HCT116 (cell line): ENCODE measurements at regions of chr4 and their contacts with region 1.

Region 1: GRCh38 chr4:84503495-84504437 is 4.7 kb upstream of the NKX6-1 start:
- DNase-seq: peak; percentile 62
- ATAC-seq: peak; percentile 64
- H3K4me3 ChIP-seq: no peak overlapping the region
- H3K27ac ChIP-seq: no peak overlapping the region
- H3K4me1 ChIP-seq: peaks cover 0 to 6% of the 10 kb centered on the region in 2 experiments; a peak in 1 of 4 replicates
- H3K27me3 ChIP-seq: no peaks in the 10 kb centered on the region
- CTCF ChIP-seq: peak; percentile 70 to 77 (median 74); a peak in 5 of 6 replicates
- POLR2A ChIP-seq: no peak
- RAD21 ChIP-seq: peak; percentile 90

Region 2: DNA sequence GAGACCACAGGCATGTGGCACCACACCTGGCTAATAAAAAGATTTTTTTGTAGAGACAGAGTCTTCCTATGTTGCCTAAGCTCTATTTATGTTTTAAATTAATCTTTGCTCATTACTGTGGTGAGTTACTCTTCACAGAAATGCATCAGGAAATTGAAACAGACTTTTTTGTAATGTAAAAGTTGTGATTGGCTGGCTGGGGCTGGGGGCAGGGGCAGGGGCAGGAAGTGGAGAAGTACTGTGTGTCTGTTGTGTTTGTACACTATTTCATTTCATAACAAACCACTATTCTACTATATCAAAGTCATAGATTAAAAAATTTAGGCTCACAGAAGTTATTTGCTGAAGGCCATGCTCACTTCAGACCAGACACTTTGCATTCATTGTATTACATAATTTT is 999.8 kb before region 1 on chr4:
- CTCF ChIA-PET with region 1: no interaction called
- POLR2A ChIA-PET with region 1: no interaction called
- RAD21 ChIA-PET with region 1: no interaction called
- intact Hi-C with region 1: loop called (anchors 10 kb)
- DNase-seq: no peak
- ATAC-seq: no peak
- H3K4me3 ChIP-seq: no peak overlapping the region
- H3K27ac ChIP-seq: no peak overlapping the region
- H3K4me1 ChIP-seq: no peaks in the 10 kb centered on the region
- H3K27me3 ChIP-seq: no peaks in the 10 kb centered on the region
- CTCF ChIP-seq: no peak
- POLR2A ChIP-seq: no peak
- RAD21 ChIP-seq: no peak

Region 3: DNA sequence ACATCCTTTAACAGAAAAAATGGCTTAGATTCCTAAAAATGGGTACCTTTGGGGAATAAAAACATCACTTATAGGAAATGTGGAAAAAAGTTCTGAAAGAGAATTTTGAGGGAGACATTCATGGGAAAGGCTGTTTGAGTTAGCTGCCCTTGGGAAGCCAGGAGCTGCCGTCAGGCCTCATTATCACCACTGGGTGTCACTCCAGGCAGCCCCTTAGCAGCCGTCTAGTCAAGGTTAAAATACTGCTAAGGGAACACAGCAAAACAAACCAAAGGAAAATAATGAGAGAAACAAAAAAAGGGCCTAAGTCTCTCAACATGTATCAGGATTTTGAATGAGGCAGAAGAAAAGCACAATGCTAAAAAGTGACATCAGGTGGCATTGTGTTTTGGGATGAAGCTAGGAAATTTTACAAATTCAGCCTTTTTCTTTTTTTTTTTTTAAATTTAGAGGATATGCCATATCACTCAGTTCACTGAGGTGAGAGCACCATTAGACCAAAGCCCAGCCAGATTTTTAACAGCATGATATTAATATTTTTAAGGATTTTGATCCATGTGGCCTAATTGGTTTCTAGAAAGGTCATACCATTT is 732.6 kb before region 1 on chr4:
- CTCF ChIA-PET with region 1: interaction called, 6 read pairs
- POLR2A ChIA-PET with region 1: no interaction called
- RAD21 ChIA-PET with region 1: no interaction called
- intact Hi-C with region 1: loop called (anchors 1 kb)
- DNase-seq: peak; percentile 51
- ATAC-seq: peak; percentile 96
- H3K4me3 ChIP-seq: no peak overlapping the region
- H3K27ac ChIP-seq: no peak overlapping the region
- H3K4me1 ChIP-seq: no peaks in the 10 kb centered on the region
- H3K27me3 ChIP-seq: no peaks in the 10 kb centered on the region
- CTCF ChIP-seq: peak; percentile 65 to 85 (median 83); a peak in 5 of 6 replicates
- POLR2A ChIP-seq: no peak
- RAD21 ChIP-seq: peak; percentile 89

Region 4: DNA sequence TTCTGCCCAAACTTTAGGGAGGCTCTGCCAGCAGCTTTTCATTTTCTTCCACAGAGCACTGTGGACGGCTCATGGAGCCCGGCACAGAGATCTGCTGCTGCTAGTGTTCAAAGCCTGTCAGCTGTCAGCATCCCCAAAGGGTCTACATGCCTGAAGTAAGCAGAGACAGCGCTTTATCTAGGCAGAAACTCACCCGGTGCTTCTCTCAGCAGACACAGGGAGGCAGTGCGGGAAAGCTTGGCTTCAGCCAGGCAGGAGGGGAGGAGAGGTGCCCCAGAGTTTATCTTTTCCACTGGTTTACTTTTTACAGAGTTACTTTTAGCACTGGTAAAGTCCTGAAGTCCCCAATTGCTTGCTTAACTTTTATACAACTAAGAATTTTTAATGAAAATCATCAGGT is 344.0 kb before region 1 on chr4:
- CTCF ChIA-PET with region 1: no interaction called
- POLR2A ChIA-PET with region 1: no interaction called
- RAD21 ChIA-PET with region 1: no interaction called
- intact Hi-C with region 1: loop called (anchors 10 kb)
- DNase-seq: peak; percentile 6
- ATAC-seq: peak; percentile 87
- H3K4me3 ChIP-seq: no peak overlapping the region
- H3K27ac ChIP-seq: no peak overlapping the region
- H3K4me1 ChIP-seq: no peaks in the 10 kb centered on the region
- H3K27me3 ChIP-seq: peaks cover 8% of the 10 kb centered on the region; the same call in 1 of the 2 replicates
- CTCF ChIP-seq: peak; percentile 8 to 50 (median 42); a peak in 4 of 6 replicates
- POLR2A ChIP-seq: no peak
- RAD21 ChIP-seq: peak; percentile 46

Region 5: GRCh38 chr4:84470204-84470785 is 33.5 kb before region 1 on chr4:
- CTCF ChIA-PET with region 1: interaction called, 3 read pairs
- POLR2A ChIA-PET with region 1: no interaction called
- RAD21 ChIA-PET with region 1: no interaction called
- intact Hi-C with region 1: loop called (anchors 2 kb)
- DNase-seq: no peak
- ATAC-seq: peak; percentile 70
- H3K4me3 ChIP-seq: no peak overlapping the region
- H3K27ac ChIP-seq: no peak overlapping the region
- H3K4me1 ChIP-seq: no peaks in the 10 kb centered on the region
- H3K27me3 ChIP-seq: no peaks in the 10 kb centered on the region
- CTCF ChIP-seq: peak; percentile 24 to 48 (median 42); a peak in 4 of 6 replicates
- POLR2A ChIP-seq: no peak
- RAD21 ChIP-seq: 0 out of 2 replicates have a peak, but pooled peaks have one; percentile 25